ENCODE measurements at regions of chr3 and their contacts with region 1.

Region 1: GRCh38 chr3:46926871-46927717 is 49.5 kb downstream of the CCDC12 start:
- DNase-seq: peak; percentile 40
- ATAC-seq: no peak

Region 2: GRCh38 chr3:46674031-46674845 is 252.9 kb before region 1 on chr3:
- intact Hi-C with region 1: no loop called
- DNase-seq: peak; percentile 11
- ATAC-seq: no peak

Region 3: GRCh38 chr3:46998121-46998851 is 71.2 kb after region 1 on chr3:
- intact Hi-C with region 1: loop called (anchors 5 kb)
- DNase-seq: peak; percentile 90
- ATAC-seq: peak; percentile 82

Region 4: GRCh38 chr3:47556351-47556750 is 629.3 kb after region 1 on chr3:
- intact Hi-C with region 1: no loop called
- DNase-seq: no peak
- ATAC-seq: no peak